ENCODE measurements at regions of chr3 and their contacts with region 1.

Region 1: GRCh38 chr3:11236595-11237461 is 35.4 kb upstream of the ATG7 start:
- DNase-seq: peak; percentile 89
- H3K4me3 Mint-ChIP-seq: no peak overlapping the region
- H3K27ac Mint-ChIP-seq: no peak overlapping the region
- H3K4me1 Mint-ChIP-seq: peaks cover 37% of the 10 kb centered on the region
- H3K27me3 Mint-ChIP-seq: peaks cover 6% of the 10 kb centered on the region

Region 2: GRCh38 chr3:11250902-11251813 is 14.3 kb after region 1 on chr3:
- CTCF ChIA-PET with region 1: interaction called, 4 read pairs
- intact Hi-C with region 1: loop called (anchors 1 kb)
- DNase-seq: peak; percentile 16
- H3K4me3 Mint-ChIP-seq: no peak overlapping the region
- H3K27ac Mint-ChIP-seq: peak overlapping the region; percentile 65
- H3K4me1 Mint-ChIP-seq: peaks cover 17% of the 10 kb centered on the region
- H3K27me3 Mint-ChIP-seq: peaks cover 3% of the 10 kb centered on the region

Region 3: DNA sequence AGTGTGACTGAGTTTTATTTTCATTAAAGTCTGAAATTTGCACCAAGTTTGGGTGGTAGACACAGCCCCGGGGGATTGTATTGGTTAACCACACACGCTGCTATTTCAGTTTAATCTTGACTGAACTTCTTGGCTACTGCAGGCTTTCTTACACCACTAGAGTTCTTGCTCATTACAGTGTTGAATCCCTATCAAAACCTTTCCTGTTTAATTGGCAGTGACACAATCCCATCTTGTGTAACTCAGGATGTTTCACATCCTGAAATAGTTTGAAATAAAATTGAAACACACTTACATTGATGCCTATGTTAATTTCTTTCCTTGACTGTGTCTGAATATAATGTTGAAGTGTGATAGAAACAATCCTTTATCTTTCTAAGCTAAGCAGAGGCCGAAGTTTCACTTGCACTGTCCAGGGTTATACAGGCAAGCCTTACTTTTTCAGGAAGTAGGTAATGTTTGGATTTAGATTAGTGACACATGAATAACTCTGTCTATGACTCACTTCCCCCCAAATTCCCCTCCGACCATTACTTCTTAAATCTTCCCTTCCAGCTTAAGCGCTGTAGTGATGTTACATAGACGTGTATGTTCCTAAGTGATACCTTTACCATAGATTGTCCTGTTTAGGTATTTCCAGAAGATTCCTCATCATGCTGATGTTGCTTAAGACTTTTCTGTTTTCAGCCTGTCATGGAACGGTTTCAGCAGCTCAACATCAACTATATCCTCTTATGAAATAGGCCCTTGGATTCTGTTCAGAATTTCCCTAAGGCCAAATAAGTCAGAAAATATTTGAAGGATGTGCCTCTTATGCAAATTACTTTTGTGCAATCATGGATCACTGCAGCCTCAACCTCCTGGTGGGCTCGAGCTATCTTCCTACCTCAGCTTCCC is 52.2 kb after region 1 on chr3:
- CTCF ChIA-PET with region 1: interaction called, 5 read pairs
- intact Hi-C with region 1: loop called (anchors 1 kb)
- DNase-seq: peak; percentile 14
- H3K4me3 Mint-ChIP-seq: no peak overlapping the region
- H3K27ac Mint-ChIP-seq: peak overlapping the region; percentile 84
- H3K4me1 Mint-ChIP-seq: peaks cover 48% of the 10 kb centered on the region
- H3K27me3 Mint-ChIP-seq: no peaks in the 10 kb centered on the region

Region 4: DNA sequence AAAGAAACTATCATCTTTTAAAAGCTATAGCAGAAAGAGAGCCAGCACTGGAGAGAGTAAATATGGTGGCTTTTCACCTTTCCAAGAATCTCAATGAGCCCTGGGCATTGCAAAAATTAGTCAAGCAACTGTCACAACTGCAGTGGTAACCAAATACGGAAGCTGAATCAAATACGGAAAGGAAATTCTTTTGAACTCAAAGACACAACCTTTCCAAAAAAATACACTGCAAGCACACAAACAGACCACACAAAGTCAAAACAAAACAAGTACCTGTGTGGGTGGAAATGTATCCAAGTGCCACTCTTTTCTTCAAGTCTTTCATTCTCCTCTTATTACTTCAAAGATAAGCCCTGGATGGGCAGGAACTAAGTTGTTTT is 389.2 kb after region 1 on chr3:
- CTCF ChIA-PET with region 1: interaction called, 3 read pairs
- intact Hi-C with region 1: loop called (anchors 1 kb)
- DNase-seq: peak; percentile 54
- H3K4me3 Mint-ChIP-seq: no peak overlapping the region
- H3K27ac Mint-ChIP-seq: no peak overlapping the region
- H3K4me1 Mint-ChIP-seq: peaks cover 60% of the 10 kb centered on the region
- H3K27me3 Mint-ChIP-seq: no peaks in the 10 kb centered on the region

Region 5: GRCh38 chr3:11651900-11652299 is 415.1 kb after region 1 on chr3:
- CTCF ChIA-PET with region 1: interaction called, 12 read pairs
- intact Hi-C with region 1: loop called (anchors 1 kb)
- DNase-seq: no peak
- H3K4me3 Mint-ChIP-seq: no peak overlapping the region
- H3K27ac Mint-ChIP-seq: no peak overlapping the region
- H3K4me1 Mint-ChIP-seq: peaks cover 6% of the 10 kb centered on the region
- H3K27me3 Mint-ChIP-seq: no peaks in the 10 kb centered on the region

Region 6: GRCh38 chr3:11803977-11804892 is 567.4 kb after region 1 on chr3:
- CTCF ChIA-PET with region 1: no interaction called
- intact Hi-C with region 1: loop called (anchors 10 kb)
- DNase-seq: peak; percentile 56
- H3K4me3 Mint-ChIP-seq: no peak overlapping the region
- H3K27ac Mint-ChIP-seq: no peak overlapping the region
- H3K4me1 Mint-ChIP-seq: peaks cover 2% of the 10 kb centered on the region
- H3K27me3 Mint-ChIP-seq: no peaks in the 10 kb centered on the region

Measured in activated naive CD4-positive, alpha-beta T cell treated with anti-CD3 and anti-CD28 coated beads for 36 hours (primary cell).